ENCODE measurements at regions of chr2 and their contacts with region 1.

Region 1: DNA sequence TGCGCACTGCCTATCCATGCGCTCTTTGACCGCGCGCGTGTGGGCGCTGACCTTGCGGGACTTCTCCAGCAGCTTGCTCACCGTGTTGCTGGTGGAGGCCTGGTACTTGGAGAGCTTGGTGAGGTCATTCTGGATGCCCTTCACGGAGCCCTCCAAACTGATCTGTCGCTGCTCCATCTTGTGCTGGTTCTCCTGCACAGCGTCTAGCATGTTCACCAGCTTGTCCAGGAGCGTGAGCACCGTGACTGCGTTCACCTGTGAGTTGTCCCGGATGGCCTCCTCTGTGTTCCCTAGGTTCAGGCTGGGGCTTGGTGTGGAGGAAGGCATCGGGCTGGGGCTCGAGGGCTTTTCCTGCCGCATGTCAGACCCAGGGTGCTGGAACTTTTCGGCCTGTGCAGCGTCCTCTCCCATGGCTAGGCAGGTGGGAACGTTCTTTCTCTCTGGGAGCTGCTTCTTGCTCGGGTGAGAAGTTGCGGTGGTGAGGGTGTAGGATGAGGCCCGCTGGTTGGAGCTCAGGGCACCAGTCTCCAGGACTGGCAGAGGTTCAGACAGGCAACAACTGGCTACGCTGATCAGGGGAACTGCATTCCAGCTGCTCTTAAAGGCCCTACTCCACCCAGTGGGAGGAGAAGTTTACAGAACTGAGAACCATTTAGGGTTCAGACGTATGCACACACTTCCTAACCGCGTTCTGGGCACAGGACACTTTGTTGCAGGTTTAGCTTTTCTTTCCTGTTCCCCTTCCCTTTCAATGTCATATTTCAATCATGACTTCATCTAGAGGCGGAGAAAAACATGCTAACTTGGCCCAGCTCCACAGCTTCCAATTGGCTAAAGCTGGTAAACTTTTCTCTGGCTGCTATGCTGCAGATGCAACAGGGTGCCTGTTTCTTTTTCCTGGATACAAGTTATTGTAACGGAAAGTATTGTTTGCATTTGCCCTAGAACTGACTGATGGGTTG is at the start of gene CAVIN2:
- DNase-seq: peak; percentile 95
- H3K4me3 Mint-ChIP-seq: peak within 1 kb of the TSS; percentile 90
- H3K27ac Mint-ChIP-seq: peak within 1 kb of the TSS; percentile 86
- H3K4me1 Mint-ChIP-seq: peaks cover 35% of the 10 kb centered on the region
- H3K27me3 Mint-ChIP-seq: no peaks in the 10 kb centered on the region
- CTCF ChIP-seq: no peak
- total RNA-seq, gene CAVIN2: 14.7 and 16.4 TPM in 2 replicates

Region 2: DNA sequence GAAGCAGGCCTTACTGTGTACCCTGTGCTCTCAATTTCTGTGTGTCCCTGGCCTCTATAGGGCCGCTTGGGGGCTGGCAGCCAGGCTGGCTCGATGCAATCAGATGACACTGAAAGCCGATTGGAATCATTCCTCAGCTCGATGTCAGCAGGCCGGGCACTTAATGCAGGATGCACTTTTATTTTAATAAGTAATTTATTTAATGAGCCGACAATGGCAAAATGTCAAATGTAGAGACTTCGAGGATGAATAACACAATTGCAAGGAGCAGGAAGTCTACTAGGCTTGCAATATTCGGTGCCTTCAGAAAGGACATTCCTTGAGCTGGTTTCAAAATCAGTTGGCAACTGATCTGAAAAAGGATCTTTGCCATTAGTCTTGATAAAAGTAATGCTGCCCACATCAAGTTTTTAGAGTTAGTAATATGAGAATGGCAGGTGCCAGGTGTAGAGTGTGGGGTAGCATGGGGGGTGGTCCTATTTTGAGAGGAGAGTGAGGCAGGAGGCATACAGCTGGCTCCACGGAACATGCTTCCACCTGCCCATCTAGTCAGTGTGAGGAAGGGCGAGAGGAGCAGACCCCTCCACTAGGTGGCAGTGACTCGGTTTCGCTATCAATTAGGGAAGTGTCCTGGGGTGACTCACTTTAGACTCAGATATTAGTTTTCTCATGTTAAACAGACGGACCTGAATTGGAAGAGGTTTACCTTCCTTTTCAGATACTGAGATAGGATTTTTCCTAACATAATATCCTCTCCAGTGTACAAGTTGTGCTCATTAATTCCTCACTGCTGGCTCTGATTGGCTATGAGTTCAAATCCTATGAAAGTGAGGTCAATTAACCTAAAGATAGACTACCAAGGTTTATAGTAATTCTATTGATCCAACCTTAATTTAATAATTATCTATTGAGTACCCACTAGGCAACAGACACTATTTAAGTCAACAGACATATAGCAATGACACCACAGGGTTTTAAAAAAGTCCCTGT is 88.0 kb before region 1 on chr2:
- CTCF ChIA-PET with region 1: no interaction called
- POLR2A ChIA-PET with region 1: no interaction called
- intact Hi-C with region 1: loop called (anchors 1 kb)
- DNase-seq: peak; percentile 82
- H3K4me3 Mint-ChIP-seq: peak overlapping the region; percentile 53
- H3K27ac Mint-ChIP-seq: no peak overlapping the region
- H3K4me1 Mint-ChIP-seq: peaks cover 6% of the 10 kb centered on the region
- H3K27me3 Mint-ChIP-seq: no peaks in the 10 kb centered on the region
- CTCF ChIP-seq: peak; percentile 57

Region 3: GRCh38 chr2:191783416-191783815 is 63.4 kb before region 1 on chr2:
- CTCF ChIA-PET with region 1: no interaction called
- POLR2A ChIA-PET with region 1: no interaction called
- intact Hi-C with region 1: no loop called
- DNase-seq: no peak
- H3K4me3 Mint-ChIP-seq: no peak overlapping the region
- H3K27ac Mint-ChIP-seq: no peak overlapping the region
- H3K4me1 Mint-ChIP-seq: no peaks in the 10 kb centered on the region
- H3K27me3 Mint-ChIP-seq: no peaks in the 10 kb centered on the region
- CTCF ChIP-seq: no peak

Region 4: GRCh38 chr2:191869178-191869577 is 22.4 kb after region 1 on chr2:
- CTCF ChIA-PET with region 1: interaction called, 11 read pairs
- POLR2A ChIA-PET with region 1: interaction called, 110 read pairs
- intact Hi-C with region 1: no loop called
- DNase-seq: peak; percentile 60
- H3K4me3 Mint-ChIP-seq: no peak overlapping the region
- H3K27ac Mint-ChIP-seq: peak overlapping the region; percentile 20
- H3K4me1 Mint-ChIP-seq: peaks cover 50% of the 10 kb centered on the region
- H3K27me3 Mint-ChIP-seq: no peaks in the 10 kb centered on the region
- CTCF ChIP-seq: no peak

Region 5: DNA sequence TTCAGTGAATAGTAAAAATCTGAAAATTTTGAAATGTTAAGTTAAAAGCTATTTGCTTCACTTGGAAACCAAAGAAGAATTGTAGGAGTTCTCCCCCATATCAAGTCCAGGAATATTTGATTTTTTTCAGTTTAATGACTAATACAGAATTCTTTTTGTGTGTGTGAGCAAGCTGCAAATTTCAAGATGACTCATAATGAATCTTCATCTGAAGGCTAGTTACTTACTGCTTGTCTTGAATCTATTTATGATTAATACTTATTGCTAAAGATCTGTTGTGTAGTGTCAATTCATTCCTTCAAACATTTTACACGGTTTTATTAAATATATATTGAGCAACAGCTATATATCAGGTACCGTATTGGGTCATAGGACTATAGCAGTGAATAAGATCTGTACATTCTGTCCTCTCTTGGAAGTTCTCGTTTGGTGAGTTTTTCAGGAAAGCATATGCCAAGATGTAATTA is 47.9 kb after region 1 on chr2:
- CTCF ChIA-PET with region 1: interaction called, 4 read pairs
- POLR2A ChIA-PET with region 1: interaction called, 121 read pairs
- intact Hi-C with region 1: loop called (anchors 2 kb)
- DNase-seq: peak; percentile 81
- H3K4me3 Mint-ChIP-seq: peak overlapping the region; percentile 26
- H3K27ac Mint-ChIP-seq: peak overlapping the region; percentile 87
- H3K4me1 Mint-ChIP-seq: peaks cover 43% of the 10 kb centered on the region
- H3K27me3 Mint-ChIP-seq: no peaks in the 10 kb centered on the region
- CTCF ChIP-seq: no peak

Region 6: GRCh38 chr2:192148620-192149321 is 302.0 kb after region 1 on chr2:
- CTCF ChIA-PET with region 1: no interaction called
- POLR2A ChIA-PET with region 1: interaction called, 13 read pairs
- intact Hi-C with region 1: no loop called
- DNase-seq: no peak
- H3K4me3 Mint-ChIP-seq: no peak overlapping the region
- H3K27ac Mint-ChIP-seq: no peak overlapping the region
- H3K4me1 Mint-ChIP-seq: peaks cover 9% of the 10 kb centered on the region
- H3K27me3 Mint-ChIP-seq: no peaks in the 10 kb centered on the region
- CTCF ChIP-seq: no peak